HCT116 (cell line): ENCODE measurements at regions of chr1 and their contacts with region 1.

Region 1: GRCh38 chr1:206912445-206913095 is 9.2 kb downstream of the FCMR start:
- DNase-seq: peak; percentile 64
- ATAC-seq: peak; percentile 57
- H3K4me3 ChIP-seq: no peak overlapping the region
- H3K27ac ChIP-seq: no peak overlapping the region
- H3K4me1 ChIP-seq: peaks cover 0 to 20% of the 10 kb centered on the region in 2 experiments; a peak in 2 of 4 replicates
- H3K27me3 ChIP-seq: no peaks in the 10 kb centered on the region; the same call in 1 of the 2 replicates
- CTCF ChIP-seq: peak; percentile 78 to 80 (median 79)
- POLR2A ChIP-seq: no peak
- RAD21 ChIP-seq: peak; percentile 88

Region 2: GRCh38 chr1:206479183-206480125 is 433.1 kb before region 1 on chr1:
- CTCF ChIA-PET with region 1: interaction called, 12 read pairs
- POLR2A ChIA-PET with region 1: no interaction called
- RAD21 ChIA-PET with region 1: no interaction called
- intact Hi-C with region 1: loop called (anchors 5 kb)
- DNase-seq: no peak
- ATAC-seq: peak; percentile 89
- H3K4me3 ChIP-seq: no peak overlapping the region
- H3K27ac ChIP-seq: no peak overlapping the region
- H3K4me1 ChIP-seq: peaks cover 0 to 6% of the 10 kb centered on the region in 2 experiments; a peak in 1 of 4 replicates
- H3K27me3 ChIP-seq: no peaks in the 10 kb centered on the region
- CTCF ChIP-seq: peak; percentile 73 to 87 (median 77); a peak in 5 of 6 replicates
- POLR2A ChIP-seq: no peak
- RAD21 ChIP-seq: peak; percentile 83

Region 3: GRCh38 chr1:206612129-206612876 is 300.3 kb before region 1 on chr1 and contains the start of gene EIF2D:
- CTCF ChIA-PET with region 1: interaction called, 7 read pairs
- POLR2A ChIA-PET with region 1: interaction called, 3 read pairs
- RAD21 ChIA-PET with region 1: no interaction called
- intact Hi-C with region 1: loop called (anchors 5 kb)
- DNase-seq: peak; percentile 79
- ATAC-seq: peak; percentile 94
- H3K4me3 ChIP-seq: peak within 1 kb of the TSS; percentile 95 to 96
- H3K27ac ChIP-seq: peak within 1 kb of the TSS; percentile 74
- H3K4me1 ChIP-seq: peaks cover 8 to 12% of the 10 kb centered on the region in 2 experiments; a peak in 2 of 4 replicates
- H3K27me3 ChIP-seq: no peaks in the 10 kb centered on the region
- CTCF ChIP-seq: peak; percentile 79 to 95 (median 79)
- POLR2A ChIP-seq: peak; percentile 86
- RAD21 ChIP-seq: no peak
- total RNA-seq, gene EIF2D: 54.8 TPM

Region 4: GRCh38 chr1:206725109-206725963 is 187.2 kb before region 1 on chr1:
- CTCF ChIA-PET with region 1: interaction called, 12 read pairs
- POLR2A ChIA-PET with region 1: no interaction called
- RAD21 ChIA-PET with region 1: interaction called in 1 of 2 experiments, 3 read pairs
- intact Hi-C with region 1: loop called (anchors 1 kb)
- DNase-seq: peak; percentile 15
- ATAC-seq: peak; percentile 70
- H3K4me3 ChIP-seq: no peak overlapping the region
- H3K27ac ChIP-seq: no peak overlapping the region
- H3K4me1 ChIP-seq: peaks cover 0 to 16% of the 10 kb centered on the region in 2 experiments; a peak in 1 of 4 replicates
- H3K27me3 ChIP-seq: no peaks in the 10 kb centered on the region
- CTCF ChIP-seq: peak in 2 of 3 experiments; percentile 67 to 76; a peak in 5 of 6 replicates
- POLR2A ChIP-seq: no peak
- RAD21 ChIP-seq: no peak

Region 5: GRCh38 chr1:206808615-206809014 is 104.0 kb before region 1 on chr1:
- CTCF ChIA-PET with region 1: interaction called, 26 read pairs
- POLR2A ChIA-PET with region 1: no interaction called
- RAD21 ChIA-PET with region 1: interaction called, 8 to 9 read pairs
- intact Hi-C with region 1: loop called (anchors 5 kb)
- DNase-seq: no peak
- ATAC-seq: peak; percentile 68
- H3K4me3 ChIP-seq: no peak overlapping the region
- H3K27ac ChIP-seq: no peak overlapping the region
- H3K4me1 ChIP-seq: no peaks in the 10 kb centered on the region
- H3K27me3 ChIP-seq: peaks cover 12% of the 10 kb centered on the region
- CTCF ChIP-seq: peak; percentile 24 to 44 (median 38); a peak in 5 of 6 replicates
- POLR2A ChIP-seq: no peak
- RAD21 ChIP-seq: peak; percentile 60

Region 6: DNA sequence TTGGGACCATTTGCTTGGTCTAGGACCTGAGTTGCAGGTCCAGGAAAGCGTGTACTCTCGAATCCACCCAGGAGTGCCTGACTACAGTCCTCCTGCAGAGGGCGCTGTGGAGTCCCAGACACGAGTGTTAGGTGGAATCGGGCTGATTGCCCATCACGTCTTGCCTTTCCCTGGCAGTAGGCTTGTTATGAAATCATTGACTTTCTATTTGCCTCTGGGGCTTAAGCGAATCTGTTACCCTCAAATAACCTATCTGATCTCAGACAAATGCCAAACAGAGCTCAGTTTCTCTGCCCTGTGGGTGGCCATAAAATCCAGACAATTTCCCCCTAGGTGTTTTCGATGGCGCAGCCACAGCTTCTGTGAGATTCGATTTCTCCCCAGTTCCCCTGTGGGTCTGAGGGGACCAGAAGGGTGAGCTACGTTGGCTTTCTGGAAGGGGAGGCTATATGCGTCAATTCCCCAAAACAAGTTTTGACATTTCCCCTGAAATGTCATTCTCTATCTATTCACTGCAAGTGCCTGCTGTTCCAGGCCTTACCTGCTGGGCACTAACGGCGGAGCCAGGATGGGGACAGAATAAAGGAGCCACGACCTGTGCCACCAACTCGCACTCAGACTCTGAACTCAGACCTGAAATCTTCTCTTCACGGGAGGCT is 47.4 kb before region 1 on chr1 and contains the start of gene IL20:
- CTCF ChIA-PET with region 1: interaction called, 9 read pairs
- POLR2A ChIA-PET with region 1: no interaction called
- RAD21 ChIA-PET with region 1: no interaction called
- intact Hi-C with region 1: loop called (anchors 1 kb)
- DNase-seq: peak; percentile 45
- ATAC-seq: peak; percentile 97
- H3K4me3 ChIP-seq: no peak within 1 kb of the TSS
- H3K27ac ChIP-seq: no peak within 1 kb of the TSS
- H3K4me1 ChIP-seq: peaks cover 0 to 7% of the 10 kb centered on the region in 2 experiments; a peak in 2 of 4 replicates
- H3K27me3 ChIP-seq: no peaks in the 10 kb centered on the region
- CTCF ChIP-seq: peak; percentile 78 to 98 (median 97)
- POLR2A ChIP-seq: no peak
- RAD21 ChIP-seq: peak; percentile 68
- total RNA-seq, gene IL20: not detected

Region 7: DNA sequence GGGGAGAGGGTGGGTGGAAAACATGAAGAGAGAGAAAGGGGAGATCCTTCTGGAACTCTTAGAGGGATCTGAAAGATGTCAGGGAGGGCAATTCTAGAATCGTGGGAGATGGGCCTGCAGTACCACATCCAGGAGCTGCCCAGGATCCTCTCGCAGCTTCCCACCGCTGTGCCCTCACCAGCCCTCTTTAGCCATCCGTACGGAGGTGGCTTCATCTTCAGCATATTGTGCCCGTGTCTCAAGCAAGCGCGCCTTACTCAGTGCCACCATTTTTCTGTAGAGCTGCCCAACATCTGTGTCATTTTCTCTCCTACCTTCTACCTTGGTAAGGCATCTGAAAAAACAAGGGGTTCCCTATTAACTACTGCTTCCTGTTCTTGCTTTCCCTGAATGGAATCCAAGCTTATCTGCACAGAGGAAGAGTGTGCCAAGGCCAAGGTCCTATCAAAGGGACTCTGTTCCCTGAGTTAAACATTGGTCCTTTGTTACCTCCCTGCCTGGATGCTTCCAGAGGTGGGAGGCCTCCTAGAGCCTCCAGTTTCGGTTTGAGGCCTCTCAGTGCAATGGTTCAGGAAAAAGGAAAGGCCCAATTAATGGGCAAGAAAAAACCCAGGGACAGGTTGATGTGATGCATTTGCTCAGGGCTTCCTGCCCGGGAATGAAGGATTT is 96.7 kb after region 1 on chr1:
- CTCF ChIA-PET with region 1: no interaction called
- POLR2A ChIA-PET with region 1: no interaction called
- RAD21 ChIA-PET with region 1: no interaction called
- intact Hi-C with region 1: no loop called
- DNase-seq: no peak
- ATAC-seq: no peak
- H3K4me3 ChIP-seq: no peak overlapping the region
- H3K27ac ChIP-seq: no peak overlapping the region
- H3K4me1 ChIP-seq: peaks cover 16 to 63% of the 10 kb centered on the region in 2 experiments
- H3K27me3 ChIP-seq: no peaks in the 10 kb centered on the region
- CTCF ChIP-seq: no peak
- POLR2A ChIP-seq: no peak
- RAD21 ChIP-seq: no peak

Region 8: DNA sequence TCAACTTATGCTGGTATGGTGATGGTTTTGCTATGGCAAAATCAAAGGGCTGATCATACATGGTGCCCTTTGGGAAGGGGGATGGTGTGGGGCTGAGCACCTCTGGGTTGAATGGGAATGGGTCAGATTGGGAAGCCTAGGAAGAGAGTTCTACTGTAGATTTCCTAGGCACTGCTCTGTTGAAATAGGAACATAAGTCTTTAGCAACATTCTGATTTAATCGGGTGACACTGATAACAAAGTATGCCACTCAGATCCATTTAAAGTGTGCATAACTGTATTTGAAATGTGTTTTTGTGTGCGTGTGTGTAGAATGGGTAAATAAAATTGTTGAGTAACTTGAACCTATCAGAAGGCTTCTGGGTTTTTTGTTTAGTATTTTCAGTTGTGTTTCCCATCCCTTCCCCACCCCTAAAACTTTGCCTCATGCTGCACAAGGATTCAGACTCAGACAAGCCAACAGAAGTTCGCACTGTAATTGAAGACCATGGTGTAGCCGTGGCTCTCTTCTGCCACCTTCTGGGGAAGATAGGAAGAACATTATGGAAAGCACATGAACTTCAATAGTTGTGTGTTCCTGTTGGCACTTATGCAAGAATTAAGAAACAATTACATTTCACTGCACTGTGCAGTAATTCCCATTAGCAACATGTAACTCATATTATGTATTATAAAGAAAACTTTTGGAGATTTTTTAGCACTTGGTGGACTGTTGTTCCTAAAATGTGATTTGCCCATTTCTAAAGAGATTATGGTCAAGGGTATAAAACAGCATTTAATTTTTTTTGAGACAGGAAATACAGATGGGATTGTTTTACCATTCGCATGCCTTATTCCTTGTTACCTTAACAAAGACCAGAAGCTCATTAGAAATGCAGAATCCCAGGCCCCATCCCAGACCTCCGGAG is 165.2 kb after region 1 on chr1:
- CTCF ChIA-PET with region 1: interaction called, 4 read pairs
- POLR2A ChIA-PET with region 1: no interaction called
- RAD21 ChIA-PET with region 1: no interaction called
- intact Hi-C with region 1: loop called (anchors 1 kb)
- DNase-seq: peak; percentile 51
- ATAC-seq: peak; percentile 91
- H3K4me3 ChIP-seq: no peak overlapping the region
- H3K27ac ChIP-seq: no peak overlapping the region
- H3K4me1 ChIP-seq: no peaks in the 10 kb centered on the region
- H3K27me3 ChIP-seq: no peaks in the 10 kb centered on the region
- CTCF ChIP-seq: peak; percentile 82 to 87 (median 84); a peak in 5 of 6 replicates
- POLR2A ChIP-seq: no peak
- RAD21 ChIP-seq: peak; percentile 93